ENCODE measurements at regions of chr17 and their contacts with region 1.

Region 1: GRCh38 chr17:14926526-14927122 is 338.5 kb downstream of the PMP22 start:
- DNase-seq: peak; percentile 7 to 66 (median 44)
- ATAC-seq: peak; percentile 61
- H3K4me3 ChIP-seq: no peak overlapping the region
- H3K4me3 Mint-ChIP-seq: no peak overlapping the region
- H3K27ac ChIP-seq: no peak overlapping the region
- H3K27ac Mint-ChIP-seq: no peak overlapping the region
- H3K4me1 ChIP-seq: no peaks in the 10 kb centered on the region
- H3K4me1 Mint-ChIP-seq: no peaks in the 10 kb centered on the region
- H3K27me3 ChIP-seq: no peaks in the 10 kb centered on the region
- H3K27me3 Mint-ChIP-seq: peaks cover 0 to 23% (median 15%) of the 10 kb centered on the region in 5 donors

Region 2: DNA sequence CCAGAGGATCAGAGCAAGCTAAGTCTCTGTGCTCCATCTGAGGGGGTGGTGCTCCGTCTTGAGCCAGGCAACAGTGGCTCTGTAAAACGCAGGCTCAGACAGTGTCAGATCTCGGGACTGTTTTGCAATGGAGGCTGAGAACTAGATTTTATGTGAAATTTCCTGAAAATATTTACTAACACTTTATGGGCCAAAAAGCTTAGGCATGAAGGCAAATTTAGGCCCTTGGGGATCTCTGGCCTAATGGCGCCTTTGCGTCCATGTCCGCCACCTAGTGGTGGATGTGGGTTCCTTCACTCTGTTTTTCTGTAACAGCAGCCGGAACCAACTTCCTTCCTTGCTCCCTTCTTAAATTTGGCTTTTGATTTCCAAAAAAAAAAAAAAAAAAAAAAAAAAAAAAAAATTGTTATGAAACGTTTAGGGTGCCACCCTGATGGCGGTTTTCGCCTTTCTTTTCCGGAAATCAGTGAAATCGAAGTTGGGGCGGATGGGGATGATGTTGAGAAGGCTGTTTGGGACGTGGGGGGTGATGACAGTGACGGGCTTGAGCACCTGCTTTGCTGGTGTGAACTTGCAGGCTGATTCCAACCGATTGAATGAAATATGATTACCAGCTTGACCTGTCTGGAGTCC is 1894.8 kb before region 1 on chr17:
- CTCF ChIA-PET with region 1: no interaction called
- POLR2A ChIA-PET with region 1: no interaction called
- intact Hi-C with region 1: loop called in 1 of 2 experiments (anchors 1 kb)
- DNase-seq: peak in 8 of 9 donors; percentile 34 to 63 (median 54)
- ATAC-seq: peak; percentile 77
- H3K4me3 ChIP-seq: no peak overlapping the region
- H3K4me3 Mint-ChIP-seq: peak overlapping the region in 8 of 10 donors; percentile 18 to 71 (median 42)
- H3K27ac ChIP-seq: no peak overlapping the region
- H3K27ac Mint-ChIP-seq: peak overlapping the region in 8 of 9 donors; percentile 41 to 90 (median 76)
- H3K4me1 ChIP-seq: peaks cover 0 to 12% of the 10 kb centered on the region in 2 donors
- H3K4me1 Mint-ChIP-seq: peaks cover 6 to 29% (median 16%) of the 10 kb centered on the region in 7 donors
- H3K27me3 ChIP-seq: peaks cover 0 to 2% of the 10 kb centered on the region in 2 donors
- H3K27me3 Mint-ChIP-seq: peaks cover 0 to 16% (median 6%) of the 10 kb centered on the region in 5 donors

Region 3: DNA sequence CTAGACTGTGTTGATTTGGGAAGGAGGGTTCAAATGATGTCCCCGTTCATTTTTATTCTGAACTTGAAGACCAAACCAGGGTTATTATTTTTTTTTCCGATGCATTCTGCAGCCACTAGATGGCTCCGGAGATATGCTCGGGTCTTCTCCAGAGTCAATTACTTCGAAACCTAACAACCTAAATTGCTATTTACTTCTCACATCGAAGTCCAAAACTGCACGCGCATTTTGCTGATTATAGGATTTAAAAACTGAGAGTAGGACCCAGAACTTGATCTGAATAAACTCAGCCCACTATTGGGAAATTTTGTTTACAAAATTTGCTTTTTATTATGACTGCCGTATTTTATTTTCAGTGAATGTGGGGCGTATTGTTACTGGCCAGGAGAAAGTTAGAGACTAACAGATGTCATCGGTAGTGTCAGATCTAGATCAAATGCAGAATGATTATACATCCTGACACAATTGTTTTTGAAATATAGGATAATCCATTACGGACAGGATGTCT is 1588.7 kb before region 1 on chr17:
- CTCF ChIA-PET with region 1: interaction called, 5 read pairs
- POLR2A ChIA-PET with region 1: no interaction called
- intact Hi-C with region 1: loop called (anchors 1 to 2 kb)
- DNase-seq: peak in 5 of 9 donors; percentile 4 to 22 (median 16)
- ATAC-seq: no peak
- H3K4me3 ChIP-seq: no peak overlapping the region
- H3K4me3 Mint-ChIP-seq: peak overlapping the region in 7 of 10 donors; percentile 28 to 63 (median 51)
- H3K27ac ChIP-seq: no peak overlapping the region
- H3K27ac Mint-ChIP-seq: no peak overlapping the region
- H3K4me1 ChIP-seq: no peaks in the 10 kb centered on the region
- H3K4me1 Mint-ChIP-seq: peaks cover 0 to 7% (median 3%) of the 10 kb centered on the region in 7 donors
- H3K27me3 ChIP-seq: peaks cover 0 to 5% of the 10 kb centered on the region in 2 donors
- H3K27me3 Mint-ChIP-seq: peaks cover 9 to 54% (median 30%) of the 10 kb centered on the region in 5 donors

Region 4: DNA sequence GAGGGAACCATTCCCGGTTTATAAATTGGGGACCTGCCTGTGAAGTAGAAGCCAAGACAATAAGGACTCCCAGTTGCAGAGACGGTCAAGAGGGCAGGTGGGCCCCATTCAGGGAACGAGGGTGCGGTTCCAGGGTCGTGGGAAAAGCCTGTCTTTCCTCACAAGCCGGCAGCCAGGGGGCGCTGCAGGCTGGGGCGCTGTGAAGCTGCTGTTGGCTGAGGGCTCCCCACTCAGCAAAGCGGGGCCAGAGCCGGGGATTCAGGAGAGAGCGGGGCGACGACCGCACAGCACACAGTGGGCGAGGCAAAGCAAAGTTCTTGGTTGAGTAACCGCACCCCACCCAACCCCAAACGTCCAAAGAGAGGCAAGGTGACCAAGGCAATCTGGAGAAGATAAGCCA is 714.8 kb before region 1 on chr17:
- CTCF ChIA-PET with region 1: no interaction called
- POLR2A ChIA-PET with region 1: no interaction called
- intact Hi-C with region 1: loop called in 1 of 2 experiments (anchors 2 kb)
- DNase-seq: peak in 6 of 9 donors; percentile 26 to 52 (median 42)
- ATAC-seq: no peak
- H3K4me3 ChIP-seq: no peak overlapping the region
- H3K4me3 Mint-ChIP-seq: no peak overlapping the region
- H3K27ac ChIP-seq: no peak overlapping the region
- H3K27ac Mint-ChIP-seq: peak overlapping the region in 1 of 9 donors; percentile 20
- H3K4me1 ChIP-seq: peaks cover 0 to 2% of the 10 kb centered on the region in 2 donors
- H3K4me1 Mint-ChIP-seq: peaks cover 14 to 36% (median 19%) of the 10 kb centered on the region in 7 donors
- H3K27me3 ChIP-seq: no peaks in the 10 kb centered on the region
- H3K27me3 Mint-ChIP-seq: no peaks in the 10 kb centered on the region

Region 5: DNA sequence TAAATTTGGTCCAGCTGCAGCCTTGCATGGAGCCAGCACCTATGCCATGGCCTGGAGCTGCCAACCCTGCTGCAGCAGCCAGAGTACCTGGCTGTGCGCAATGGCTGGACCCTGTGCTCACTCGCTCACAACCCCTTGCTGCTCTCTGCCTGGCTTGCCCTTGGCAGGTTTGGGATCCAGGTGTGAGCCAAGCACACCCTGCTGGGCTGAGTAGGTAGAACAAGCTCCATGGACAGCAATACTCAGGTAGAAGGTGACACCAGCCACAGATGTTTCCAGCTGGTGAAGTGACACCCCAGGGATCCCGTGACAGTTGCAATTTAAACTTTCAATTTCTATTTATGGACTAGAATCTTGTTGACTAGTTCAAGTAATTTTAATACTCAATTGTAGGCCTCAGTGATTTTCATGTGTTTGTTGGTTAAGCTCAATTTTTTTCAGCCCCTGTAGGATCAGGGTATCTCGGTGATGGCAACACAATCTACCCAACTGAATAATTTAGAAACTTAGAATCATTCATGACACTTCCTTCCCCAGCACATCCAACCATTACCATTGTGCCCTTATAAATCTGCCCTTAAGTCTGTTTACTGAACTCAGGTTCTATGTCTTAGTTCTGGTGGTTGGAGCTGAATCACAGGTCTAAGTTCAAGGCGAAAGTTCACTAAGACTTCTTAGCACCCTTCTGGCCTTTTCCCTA is 141.5 kb before region 1 on chr17:
- CTCF ChIA-PET with region 1: no interaction called
- POLR2A ChIA-PET with region 1: no interaction called
- intact Hi-C with region 1: loop called in 1 of 2 experiments (anchors 10 kb)
- DNase-seq: peak in 8 of 9 donors; percentile 12 to 58 (median 40)
- ATAC-seq: peak; percentile 51
- H3K4me3 ChIP-seq: no peak overlapping the region
- H3K4me3 Mint-ChIP-seq: no peak overlapping the region
- H3K27ac ChIP-seq: no peak overlapping the region
- H3K27ac Mint-ChIP-seq: no peak overlapping the region
- H3K4me1 ChIP-seq: no peaks in the 10 kb centered on the region
- H3K4me1 Mint-ChIP-seq: no peaks in the 10 kb centered on the region
- H3K27me3 ChIP-seq: no peaks in the 10 kb centered on the region
- H3K27me3 Mint-ChIP-seq: peaks cover 0 to 18% (median 13%) of the 10 kb centered on the region in 5 donors

Region 6: GRCh38 chr17:14886240-14886639 is 40.4 kb before region 1 on chr17:
- CTCF ChIA-PET with region 1: no interaction called
- POLR2A ChIA-PET with region 1: no interaction called
- intact Hi-C with region 1: no loop called
- DNase-seq: no peak
- ATAC-seq: no peak
- H3K4me3 ChIP-seq: no peak overlapping the region
- H3K4me3 Mint-ChIP-seq: no peak overlapping the region
- H3K27ac ChIP-seq: no peak overlapping the region
- H3K27ac Mint-ChIP-seq: no peak overlapping the region
- H3K4me1 ChIP-seq: no peaks in the 10 kb centered on the region
- H3K4me1 Mint-ChIP-seq: no peaks in the 10 kb centered on the region
- H3K27me3 ChIP-seq: no peaks in the 10 kb centered on the region
- H3K27me3 Mint-ChIP-seq: peaks cover 0 to 38% (median 30%) of the 10 kb centered on the region in 5 donors

Measured in naive thymus-derived CD4-positive, alpha-beta T cell (primary cell).